Heart left ventricle (tissue), 16 donors: ENCODE measurements at regions of chr10 and their contacts with region 1.

Region 1: GRCh38 chr10:79178614-79179163 is 109.9 kb downstream of the ZMIZ1 start:
- DNase-seq: peak in 3 of 5 donors; percentile 66 to 76 (median 67)
- ATAC-seq: peak; percentile 19 to 65 (median 46)
- H3K4me3 ChIP-seq: no peak overlapping the region
- H3K27ac ChIP-seq: peak overlapping the region in 11 of 12 donors; percentile 19 to 81 (median 73)
- H3K4me1 ChIP-seq: peaks cover 43 to 100% (median 98%) of the 10 kb centered on the region in 12 donors
- H3K27me3 ChIP-seq: no peaks in the 10 kb centered on the region
- CTCF ChIP-seq: no peak
- POLR2A ChIP-seq: no peak

Region 2: DNA sequence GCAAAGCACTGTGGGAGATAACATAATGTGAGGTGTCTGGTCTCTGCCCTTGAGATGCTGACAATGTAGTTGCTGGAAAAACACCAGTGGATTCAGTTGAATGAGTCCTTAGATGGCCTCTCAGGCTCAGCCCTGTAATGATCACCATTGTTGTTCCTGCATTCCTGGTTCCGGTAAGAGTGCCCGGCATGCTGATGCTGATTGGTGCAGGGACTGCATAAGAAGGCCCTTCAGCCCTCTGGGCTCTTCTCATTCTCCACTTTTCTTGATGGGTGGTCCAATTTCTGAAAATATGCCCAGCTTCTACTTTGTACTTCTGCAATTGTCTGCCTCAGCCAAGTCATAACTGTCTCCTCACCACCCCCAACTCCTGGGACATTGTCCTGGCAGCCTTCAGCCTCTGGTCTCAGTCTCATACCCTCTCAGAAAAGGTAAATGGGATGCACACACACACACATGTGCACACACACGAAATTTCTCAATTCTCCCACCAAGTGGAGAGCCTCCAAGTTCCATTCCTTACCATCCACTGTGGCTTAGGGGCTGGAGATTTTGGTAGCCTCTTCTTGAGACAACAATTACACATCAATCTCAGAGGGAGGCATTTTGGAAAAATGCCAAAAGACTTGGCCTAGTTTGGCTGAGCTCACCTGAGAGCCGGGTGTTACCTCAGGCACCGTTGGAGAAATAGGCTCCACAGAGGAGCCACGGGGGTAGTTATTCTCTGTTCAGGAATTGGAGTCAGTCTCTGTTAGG is 830.1 kb before region 1 on chr10:
- intact Hi-C with region 1: loop called in 1 of 10 experiments (anchors 5 kb)
- DNase-seq: peak in 2 of 5 donors; percentile 5 to 21
- ATAC-seq: no peak
- H3K4me3 ChIP-seq: no peak overlapping the region
- H3K27ac ChIP-seq: peak overlapping the region in 2 of 12 donors; percentile 40 to 41
- H3K4me1 ChIP-seq: peaks cover 0 to 18% (median 0%) of the 10 kb centered on the region in 12 donors
- H3K27me3 ChIP-seq: no peaks in the 10 kb centered on the region
- CTCF ChIP-seq: no peak
- POLR2A ChIP-seq: no peak